B cell (primary cell): ENCODE measurements at regions of chr1 and their contacts with region 1.

Region 1: GRCh38 chr1:247210376-247211117 is 38.7 kb upstream of the ZNF124 start:
- DNase-seq: peak; percentile 96
- ATAC-seq: peak; percentile 99
- H3K4me3 ChIP-seq: peak overlapping the region; percentile 72 to 91 (median 79)
- H3K4me3 Mint-ChIP-seq: peak overlapping the region; percentile 95
- H3K27ac ChIP-seq: peak overlapping the region; percentile 85 to 87
- H3K27ac Mint-ChIP-seq: peak overlapping the region; percentile 96
- H3K4me1 ChIP-seq: peaks cover 38 to 41% of the 10 kb centered on the region in 2 donors
- H3K4me1 Mint-ChIP-seq: peaks cover 58% of the 10 kb centered on the region
- H3K27me3 ChIP-seq: no peaks in the 10 kb centered on the region
- H3K27me3 Mint-ChIP-seq: no peaks in the 10 kb centered on the region
- CTCF ChIP-seq: no peak

Region 2: GRCh38 chr1:246566128-246566812 is 644.3 kb before region 1 on chr1 and contains the starts of genes CNST and TFB2M:
- CTCF ChIA-PET with region 1: no interaction called
- POLR2A ChIA-PET with region 1: no interaction called
- intact Hi-C with region 1: loop called (anchors 5 kb)
- DNase-seq: peak; percentile 98
- ATAC-seq: peak; percentile 90
- H3K4me3 ChIP-seq: peak within 1 kb of the TSS; percentile 70 to 100 (median 95)
- H3K4me3 Mint-ChIP-seq: peak within 1 kb of the TSS; percentile 98
- H3K27ac ChIP-seq: peak within 1 kb of the TSS; percentile 83 to 95
- H3K27ac Mint-ChIP-seq: peak within 1 kb of the TSS; percentile 94
- H3K4me1 ChIP-seq: peaks cover 50 to 53% of the 10 kb centered on the region in 2 donors
- H3K4me1 Mint-ChIP-seq: peaks cover 45% of the 10 kb centered on the region
- H3K27me3 ChIP-seq: no peaks in the 10 kb centered on the region
- H3K27me3 Mint-ChIP-seq: no peaks in the 10 kb centered on the region
- CTCF ChIP-seq: no peak
- total RNA-seq, gene CNST: 54.0 and 54.6 TPM in 2 replicates
- total RNA-seq, gene TFB2M: 11.6 and 14.7 TPM in 2 replicates

Region 3: GRCh38 chr1:247078261-247079140 is 132.0 kb before region 1 on chr1 and contains the start of gene ZNF670:
- CTCF ChIA-PET with region 1: no interaction called
- POLR2A ChIA-PET with region 1: interaction called, 5 read pairs
- intact Hi-C with region 1: loop called (anchors 2 kb)
- DNase-seq: peak; percentile 86
- ATAC-seq: peak; percentile 98
- H3K4me3 ChIP-seq: peak within 1 kb of the TSS; percentile 60 to 99 (median 93)
- H3K4me3 Mint-ChIP-seq: peak within 1 kb of the TSS; percentile 93
- H3K27ac ChIP-seq: peak within 1 kb of the TSS; percentile 61 to 80
- H3K27ac Mint-ChIP-seq: peak within 1 kb of the TSS; percentile 79
- H3K4me1 ChIP-seq: peaks cover 11 to 20% of the 10 kb centered on the region in 2 donors
- H3K4me1 Mint-ChIP-seq: peaks cover 25% of the 10 kb centered on the region
- H3K27me3 ChIP-seq: no peaks in the 10 kb centered on the region
- H3K27me3 Mint-ChIP-seq: peaks cover 3% of the 10 kb centered on the region
- CTCF ChIP-seq: no peak
- total RNA-seq, gene ZNF670: 4.4 and 4.6 TPM in 2 replicates

Region 4: DNA sequence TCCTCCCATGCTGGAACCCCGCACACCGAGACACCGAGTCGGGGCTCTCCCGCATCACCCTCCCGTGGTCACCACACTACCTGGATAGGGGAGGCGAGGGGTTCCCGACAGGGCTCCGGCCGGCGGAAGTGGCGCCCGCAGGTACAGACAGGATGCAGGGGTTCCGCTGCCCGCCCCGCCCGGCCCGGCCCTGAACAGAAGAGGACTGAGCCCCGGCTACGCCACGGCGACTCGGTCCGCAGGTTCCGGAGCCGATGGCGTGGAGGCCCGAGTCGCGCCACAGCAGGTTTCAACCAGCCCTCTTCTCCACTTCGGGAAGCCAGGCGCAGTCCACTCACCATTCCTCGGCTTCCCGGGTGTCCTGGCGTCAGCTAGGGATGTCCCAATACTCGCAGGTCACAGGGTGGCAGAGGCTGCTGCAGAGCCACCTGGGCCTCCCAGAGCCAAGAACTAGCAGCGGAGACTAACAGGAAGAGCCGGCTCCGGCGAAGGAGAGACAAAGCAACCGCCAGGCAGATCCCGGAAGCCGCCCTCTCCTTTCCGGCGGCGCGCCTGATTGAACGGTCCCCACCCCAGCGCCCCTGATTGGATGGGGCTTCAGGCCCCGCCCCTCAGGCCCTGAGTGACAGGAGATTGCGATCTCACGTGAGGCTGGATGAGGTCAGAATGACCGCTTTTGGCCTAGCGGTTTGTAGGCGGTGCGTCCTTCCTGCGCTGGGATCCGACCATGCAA is 106.5 kb before region 1 on chr1 and contains the start of gene ZNF669:
- CTCF ChIA-PET with region 1: interaction called, 3 read pairs
- POLR2A ChIA-PET with region 1: no interaction called
- intact Hi-C with region 1: loop called (anchors 2 kb)
- DNase-seq: peak; percentile 96
- ATAC-seq: peak; percentile 99
- H3K4me3 ChIP-seq: peak within 1 kb of the TSS; percentile 78 to 98 (median 87)
- H3K4me3 Mint-ChIP-seq: peak within 1 kb of the TSS; percentile 95
- H3K27ac ChIP-seq: peak within 1 kb of the TSS; percentile 80 to 90
- H3K27ac Mint-ChIP-seq: peak within 1 kb of the TSS; percentile 89
- H3K4me1 ChIP-seq: peaks cover 6 to 17% of the 10 kb centered on the region in 2 donors
- H3K4me1 Mint-ChIP-seq: peaks cover 19% of the 10 kb centered on the region
- H3K27me3 ChIP-seq: peaks cover 0 to 14% (median 6%) of the 10 kb centered on the region in 4 experiments
- H3K27me3 Mint-ChIP-seq: peaks cover 23% of the 10 kb centered on the region
- CTCF ChIP-seq: no peak
- total RNA-seq, gene ZNF669: 20.8 and 21.3 TPM in 2 replicates

Region 5: GRCh38 chr1:247172996-247173395 is 37.6 kb before region 1 on chr1:
- CTCF ChIA-PET with region 1: no interaction called
- POLR2A ChIA-PET with region 1: interaction called, 3 read pairs
- intact Hi-C with region 1: loop called (anchors 2 kb)
- DNase-seq: no peak
- ATAC-seq: no peak
- H3K4me3 ChIP-seq: no peak overlapping the region
- H3K4me3 Mint-ChIP-seq: no peak overlapping the region
- H3K27ac ChIP-seq: no peak overlapping the region
- H3K27ac Mint-ChIP-seq: no peak overlapping the region
- H3K4me1 ChIP-seq: peaks cover 0 to 6% of the 10 kb centered on the region in 2 donors
- H3K4me1 Mint-ChIP-seq: peaks cover 19% of the 10 kb centered on the region
- H3K27me3 ChIP-seq: peaks cover 0 to 2% (median 0%) of the 10 kb centered on the region in 4 experiments
- H3K27me3 Mint-ChIP-seq: no peaks in the 10 kb centered on the region
- CTCF ChIP-seq: no peak

Region 6: GRCh38 chr1:247331172-247331991 is 120.8 kb after region 1 on chr1 and contains the start of gene ZNF496:
- CTCF ChIA-PET with region 1: no interaction called
- POLR2A ChIA-PET with region 1: no interaction called
- intact Hi-C with region 1: loop called (anchors 5 kb)
- DNase-seq: peak; percentile 68
- ATAC-seq: peak; percentile 69
- H3K4me3 ChIP-seq: peak within 1 kb of the TSS in 4 of 5 experiments; percentile 65 to 91 (median 86)
- H3K4me3 Mint-ChIP-seq: peak within 1 kb of the TSS; percentile 95
- H3K27ac ChIP-seq: peak within 1 kb of the TSS in 1 of 2 donors; percentile 42
- H3K27ac Mint-ChIP-seq: peak within 1 kb of the TSS; percentile 88
- H3K4me1 ChIP-seq: peaks cover 14 to 17% of the 10 kb centered on the region in 2 donors
- H3K4me1 Mint-ChIP-seq: peaks cover 17% of the 10 kb centered on the region
- H3K27me3 ChIP-seq: peaks cover 0 to 4% (median 0%) of the 10 kb centered on the region in 4 experiments
- H3K27me3 Mint-ChIP-seq: no peaks in the 10 kb centered on the region
- CTCF ChIP-seq: no peak
- total RNA-seq, gene ZNF496: 22.6 and 23.1 TPM in 2 replicates